Lower lobe of right lung (tissue), 2 donors: ENCODE measurements at regions of chr11 and their contacts with region 1.

Region 1: DNA sequence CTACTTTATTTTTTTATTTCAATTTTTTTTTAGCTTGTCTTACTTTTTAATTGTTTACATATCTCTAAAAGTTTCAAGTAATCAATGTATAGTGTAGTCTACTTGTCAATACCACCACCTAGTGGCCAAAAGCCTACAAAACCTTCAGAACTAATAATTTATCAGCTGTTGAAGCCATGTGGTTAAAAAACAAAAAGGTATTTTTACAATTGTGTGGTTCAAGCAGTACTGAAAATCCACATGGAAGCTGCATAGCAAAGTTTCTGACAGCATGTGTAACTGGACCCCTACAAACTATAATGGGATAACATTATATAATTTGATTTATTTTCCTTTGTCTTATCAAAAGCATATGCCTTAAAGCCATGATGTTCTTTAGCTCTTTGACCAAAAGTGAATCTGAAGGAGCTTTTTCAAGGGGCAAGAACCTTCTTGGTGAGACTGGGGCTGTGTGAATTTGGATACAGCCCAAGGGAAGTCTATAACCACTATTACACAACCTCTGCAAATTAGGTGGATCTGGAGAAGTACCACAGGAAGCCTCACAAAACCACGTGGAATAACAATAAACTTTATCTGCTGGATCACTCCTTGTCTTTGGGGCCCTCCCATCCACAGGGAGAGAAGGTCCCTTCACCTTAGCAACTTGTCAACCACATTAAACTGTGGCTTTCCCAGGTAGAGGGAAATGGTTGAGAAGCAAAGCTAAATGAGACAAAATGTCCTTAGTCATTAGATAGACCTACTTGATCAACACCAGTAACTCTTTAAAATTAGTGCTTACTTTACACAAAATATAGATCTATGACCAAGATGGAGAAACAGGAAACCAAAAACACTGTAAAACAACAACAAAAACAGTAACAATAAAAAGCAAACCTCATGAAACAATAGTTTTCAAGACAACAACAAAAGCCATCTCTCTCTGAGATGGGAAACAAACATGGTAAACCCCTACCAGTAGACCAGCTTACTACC is 9.9 kb downstream of the NARS2 start:
- DNase-seq: no peak
- ATAC-seq: peak; percentile 63 to 78
- H3K4me3 ChIP-seq: no peak overlapping the region
- H3K27ac ChIP-seq: no peak overlapping the region
- H3K4me1 ChIP-seq: peaks cover 41% of the 10 kb centered on the region
- H3K27me3 ChIP-seq: no peaks in the 10 kb centered on the region
- CTCF ChIP-seq: peak; percentile 77

Region 2: GRCh38 chr11:78099666-78100065 is 465.1 kb before region 1 on chr11:
- intact Hi-C with region 1: loop called (anchors 5 kb)
- DNase-seq: no peak
- ATAC-seq: no peak
- H3K4me3 ChIP-seq: no peak overlapping the region
- H3K27ac ChIP-seq: no peak overlapping the region
- H3K4me1 ChIP-seq: no peaks in the 10 kb centered on the region
- H3K27me3 ChIP-seq: no peaks in the 10 kb centered on the region
- CTCF ChIP-seq: no peak

Region 3: GRCh38 chr11:78416305-78417178 is 148.2 kb before region 1 on chr11:
- intact Hi-C with region 1: loop called (anchors 10 kb)
- DNase-seq: peak; percentile 89
- ATAC-seq: peak; percentile 84 to 87
- H3K4me3 ChIP-seq: peak overlapping the region; percentile 86
- H3K27ac ChIP-seq: peak overlapping the region; percentile 97
- H3K4me1 ChIP-seq: peaks cover 47% of the 10 kb centered on the region
- H3K27me3 ChIP-seq: no peaks in the 10 kb centered on the region
- CTCF ChIP-seq: peak; percentile 51